ENCODE measurements at regions of chr9 and their contacts with region 1.

Region 1: GRCh38 chr9:112028280-112029221 is 131.9 kb downstream of the UGCG start:
- DNase-seq: peak; percentile 57
- CTCF ChIP-seq: no peak

Region 2: GRCh38 chr9:112012026-112012902 is 16.3 kb before region 1 on chr9:
- CTCF ChIA-PET with region 1: interaction called, 16 read pairs
- POLR2A ChIA-PET with region 1: interaction called, 3 read pairs
- DNase-seq: peak; percentile 65
- CTCF ChIP-seq: no peak